Breast epithelium (tissue), 4 donors: ENCODE measurements at regions of chr13 and their contacts with region 1.

Region 1: GRCh38 chr13:59374720-59375119 is 789.0 kb downstream of the DIAPH3 start:
- DNase-seq: no peak
- H3K4me3 ChIP-seq: no peak overlapping the region
- H3K27ac ChIP-seq: no peak overlapping the region
- H3K4me1 ChIP-seq: no peaks in the 10 kb centered on the region
- H3K27me3 ChIP-seq: no peaks in the 10 kb centered on the region
- CTCF ChIP-seq: no peak
- POLR2A ChIP-seq: no peak

Region 2: GRCh38 chr13:59038824-59039223 is 335.9 kb before region 1 on chr13:
- intact Hi-C with region 1: loop called (anchors 5 kb)
- DNase-seq: no peak
- H3K4me3 ChIP-seq: no peak overlapping the region
- H3K27ac ChIP-seq: no peak overlapping the region
- H3K4me1 ChIP-seq: no peaks in the 10 kb centered on the region
- H3K27me3 ChIP-seq: no peaks in the 10 kb centered on the region
- CTCF ChIP-seq: no peak
- POLR2A ChIP-seq: no peak

Region 3: DNA sequence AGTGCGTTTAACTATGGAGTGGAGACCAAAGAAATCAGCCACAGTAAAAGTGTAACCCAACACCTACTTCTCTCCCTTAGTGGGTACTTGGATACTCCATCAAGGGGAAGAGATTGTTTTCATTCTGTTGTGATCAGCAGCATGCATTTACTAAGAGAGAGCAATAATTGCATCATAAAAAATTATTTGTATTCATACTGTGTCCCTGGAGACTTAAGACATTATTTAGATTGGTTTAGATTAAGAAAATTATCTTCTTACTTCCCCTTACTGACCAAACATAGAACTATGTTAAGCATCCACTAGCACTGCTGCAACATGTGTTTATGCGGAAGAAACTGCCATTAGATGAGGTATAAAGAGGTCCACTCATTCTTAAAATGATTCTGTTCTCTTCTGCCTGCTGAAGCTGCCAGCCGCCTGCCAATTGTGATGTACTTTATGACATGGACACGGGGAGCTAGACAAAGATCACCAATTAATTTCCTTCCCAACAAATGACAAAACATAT is 50.5 kb after region 1 on chr13:
- intact Hi-C with region 1: no loop called
- DNase-seq: no peak
- H3K4me3 ChIP-seq: no peak overlapping the region
- H3K27ac ChIP-seq: no peak overlapping the region
- H3K4me1 ChIP-seq: no peaks in the 10 kb centered on the region
- H3K27me3 ChIP-seq: no peaks in the 10 kb centered on the region
- CTCF ChIP-seq: no peak
- POLR2A ChIP-seq: no peak